ENCODE measurements at regions of chr2 and their contacts with region 1.

Region 1: DNA sequence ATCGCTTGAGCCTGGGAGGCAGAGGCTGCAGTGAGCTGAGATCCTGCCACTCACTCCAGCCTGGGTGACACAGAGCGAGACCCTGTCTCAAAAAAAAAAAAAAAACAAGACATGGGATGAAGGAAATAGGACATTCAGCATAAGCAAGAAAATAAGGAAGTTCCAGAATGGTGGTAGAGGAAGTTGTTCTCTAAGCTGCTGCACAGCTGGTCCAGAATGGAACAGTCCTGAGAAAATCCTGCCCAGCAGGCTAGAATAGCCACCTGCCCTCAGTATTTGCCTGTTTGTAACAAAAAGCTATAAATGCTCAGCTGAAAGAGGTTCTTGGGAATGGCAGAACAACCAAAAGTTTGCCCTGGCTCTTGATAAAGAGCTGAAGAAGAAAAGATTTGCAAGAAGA is 11.1 kb upstream of the MAPRE3 start:
- DNase-seq: no peak
- H3K4me3 ChIP-seq: no peak overlapping the region
- H3K27ac ChIP-seq: no peak overlapping the region
- H3K4me1 ChIP-seq: peaks cover 0 to 3% of the 10 kb centered on the region in 2 experiments; a peak in 1 of 4 replicates
- H3K27me3 ChIP-seq: peaks cover 48% of the 10 kb centered on the region
- CTCF ChIP-seq: no peak
- EP300 ChIP-seq: no peak
- RAD21 ChIP-seq: no peak

Region 2: GRCh38 chr2:26630669-26631360 is 328.5 kb before region 1 on chr2:
- CTCF ChIA-PET with region 1: no interaction called
- POLR2A ChIA-PET with region 1: no interaction called
- DNase-seq: no peak
- H3K4me3 ChIP-seq: no peak overlapping the region
- H3K27ac ChIP-seq: no peak overlapping the region
- H3K4me1 ChIP-seq: peaks cover 0 to 18% of the 10 kb centered on the region in 2 experiments; a peak in 1 of 4 replicates
- H3K27me3 ChIP-seq: 0 out of 2 replicates have a peak, but pooled peaks cover 26% of the 10 kb centered on the region
- CTCF ChIP-seq: no peak
- EP300 ChIP-seq: no peak
- RAD21 ChIP-seq: no peak

Region 3: DNA sequence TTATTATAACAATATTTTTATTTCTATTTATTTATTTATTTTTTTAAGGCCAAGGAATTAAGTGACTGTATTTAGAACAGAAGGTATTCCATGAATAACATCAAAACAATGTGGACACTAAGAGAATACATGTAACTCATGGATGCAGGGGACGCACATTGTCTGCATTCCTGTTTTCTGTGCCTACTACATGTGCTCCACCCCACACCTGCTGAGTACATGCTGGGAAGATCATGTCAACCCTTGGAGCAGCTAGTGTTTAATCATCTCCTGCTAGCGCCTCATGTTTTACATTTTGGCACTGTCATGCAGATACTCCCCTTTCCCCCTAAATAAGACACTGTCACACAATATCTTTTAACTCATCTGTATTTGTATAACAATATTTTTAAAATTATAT is 82.1 kb before region 1 on chr2:
- CTCF ChIA-PET with region 1: no interaction called
- POLR2A ChIA-PET with region 1: no interaction called
- DNase-seq: no peak
- H3K4me3 ChIP-seq: no peak overlapping the region
- H3K27ac ChIP-seq: no peak overlapping the region
- H3K4me1 ChIP-seq: peaks cover 0 to 2% of the 10 kb centered on the region in 2 experiments; a peak in 1 of 4 replicates
- H3K27me3 ChIP-seq: peaks cover 28% of the 10 kb centered on the region; the same call in 1 of the 2 replicates
- CTCF ChIP-seq: no peak
- EP300 ChIP-seq: no peak
- RAD21 ChIP-seq: no peak

Region 4: GRCh38 chr2:26970244-26970920 is 11.1 kb after region 1 on chr2 and contains the start of gene MAPRE3:
- CTCF ChIA-PET with region 1: interaction called, 257 read pairs
- POLR2A ChIA-PET with region 1: no interaction called
- DNase-seq: peak; percentile 100
- H3K4me3 ChIP-seq: peak within 1 kb of the TSS; percentile 65 to 78
- H3K27ac ChIP-seq: peak within 1 kb of the TSS in 1 of 2 experiments; percentile 7; a peak in 1 of 4 replicates
- H3K4me1 ChIP-seq: peaks cover 0 to 13% of the 10 kb centered on the region in 2 experiments; a peak in 2 of 4 replicates
- H3K27me3 ChIP-seq: peaks cover 7% of the 10 kb centered on the region; the same call in 1 of the 2 replicates
- CTCF ChIP-seq: no peak
- EP300 ChIP-seq: no peak
- RAD21 ChIP-seq: no peak
- polyA plus RNA-seq, gene MAPRE3: 20.2 and 24.4 TPM in 2 replicates

Region 5: GRCh38 chr2:27016801-27017325 is 57.5 kb after region 1 on chr2:
- CTCF ChIA-PET with region 1: interaction called, 1,017 read pairs
- POLR2A ChIA-PET with region 1: interaction called, 17 read pairs
- DNase-seq: peak; percentile 86
- H3K4me3 ChIP-seq: no peak overlapping the region
- H3K27ac ChIP-seq: peak overlapping the region in 1 of 2 experiments; percentile 68; a peak in 1 of 4 replicates
- H3K4me1 ChIP-seq: peaks cover 17 to 21% of the 10 kb centered on the region in 2 experiments; a peak in 2 of 4 replicates
- H3K27me3 ChIP-seq: no peaks in the 10 kb centered on the region
- CTCF ChIP-seq: peak; percentile 90
- EP300 ChIP-seq: no peak
- RAD21 ChIP-seq: peak; percentile 94

Region 6: DNA sequence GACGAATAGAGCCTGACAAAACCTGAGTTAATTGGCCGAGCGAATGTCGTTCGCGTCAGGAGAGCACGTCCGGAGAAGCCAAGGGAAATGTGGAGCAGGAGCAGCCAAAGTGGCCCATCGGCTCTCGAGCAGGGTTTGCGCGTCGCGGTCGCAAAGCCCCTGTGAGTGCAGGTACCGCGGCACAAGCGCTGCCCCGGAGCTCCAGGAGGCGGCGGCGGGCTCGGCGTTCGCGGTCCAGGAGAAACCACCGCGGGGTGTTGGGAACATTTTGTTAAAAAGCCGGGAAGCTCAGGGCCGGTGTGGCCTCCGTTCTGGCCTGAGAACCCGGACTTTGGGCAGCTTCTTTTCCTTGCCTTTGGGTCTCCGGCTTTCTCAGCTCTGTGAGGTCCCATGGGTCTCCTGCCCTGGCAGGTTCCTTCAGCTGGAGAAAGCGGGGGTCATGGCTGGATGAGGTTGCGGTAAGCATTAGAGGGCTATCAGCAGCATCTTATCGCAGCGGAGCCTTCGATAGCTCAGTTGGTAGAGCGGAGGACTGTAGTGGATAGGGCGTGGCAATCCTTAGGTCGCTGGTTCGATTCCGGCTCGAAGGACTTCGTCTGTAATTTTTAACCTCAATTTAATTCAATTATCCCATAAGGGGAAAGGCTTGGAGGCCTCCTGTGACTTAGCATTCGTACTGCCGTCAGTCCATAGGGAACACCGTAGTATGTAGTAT is 91.1 kb after region 1 on chr2:
- CTCF ChIA-PET with region 1: interaction called, 40 read pairs
- POLR2A ChIA-PET with region 1: interaction called, 8 read pairs
- DNase-seq: peak; percentile 93
- H3K4me3 ChIP-seq: peak overlapping the region; percentile 86 to 89
- H3K27ac ChIP-seq: peak overlapping the region; percentile 81 to 98
- H3K4me1 ChIP-seq: peaks cover 10 to 15% of the 10 kb centered on the region in 2 experiments; a peak in 2 of 4 replicates
- H3K27me3 ChIP-seq: no peaks in the 10 kb centered on the region
- CTCF ChIP-seq: peak; percentile 47
- EP300 ChIP-seq: peak in 1 of 2 experiments; percentile 76; a peak in 2 of 4 replicates
- RAD21 ChIP-seq: no peak; the same call in 1 of the 2 replicates

Region 7: GRCh38 chr2:27078267-27079194 is 119.2 kb after region 1 on chr2 and contains the start of gene EMILIN1:
- CTCF ChIA-PET with region 1: interaction called, 27 read pairs
- POLR2A ChIA-PET with region 1: no interaction called
- DNase-seq: peak; percentile 97
- H3K4me3 ChIP-seq: peak within 1 kb of the TSS; percentile 79 to 93
- H3K27ac ChIP-seq: peak within 1 kb of the TSS; percentile 79 to 99
- H3K4me1 ChIP-seq: peaks cover 36 to 76% of the 10 kb centered on the region in 2 experiments
- H3K27me3 ChIP-seq: no peaks in the 10 kb centered on the region
- CTCF ChIP-seq: peak; percentile 24
- EP300 ChIP-seq: peak; percentile 86 to 91; a peak in 3 of 4 replicates
- RAD21 ChIP-seq: peak; percentile 17
- polyA plus RNA-seq, gene EMILIN1: 184 and 286 TPM in 2 replicates

Region 8: GRCh38 chr2:27191053-27191829 is 231.9 kb after region 1 on chr2:
- CTCF ChIA-PET with region 1: interaction called, 24 read pairs
- POLR2A ChIA-PET with region 1: no interaction called
- DNase-seq: peak; percentile 84
- H3K4me3 ChIP-seq: no peak overlapping the region
- H3K27ac ChIP-seq: no peak overlapping the region
- H3K4me1 ChIP-seq: no peaks in the 10 kb centered on the region
- H3K27me3 ChIP-seq: no peaks in the 10 kb centered on the region
- CTCF ChIP-seq: peak; percentile 95
- EP300 ChIP-seq: 0 out of 4 replicates have a peak, but pooled peaks of 1 of the 2 experiments have one; percentile 20
- RAD21 ChIP-seq: peak; percentile 98

Region 9: DNA sequence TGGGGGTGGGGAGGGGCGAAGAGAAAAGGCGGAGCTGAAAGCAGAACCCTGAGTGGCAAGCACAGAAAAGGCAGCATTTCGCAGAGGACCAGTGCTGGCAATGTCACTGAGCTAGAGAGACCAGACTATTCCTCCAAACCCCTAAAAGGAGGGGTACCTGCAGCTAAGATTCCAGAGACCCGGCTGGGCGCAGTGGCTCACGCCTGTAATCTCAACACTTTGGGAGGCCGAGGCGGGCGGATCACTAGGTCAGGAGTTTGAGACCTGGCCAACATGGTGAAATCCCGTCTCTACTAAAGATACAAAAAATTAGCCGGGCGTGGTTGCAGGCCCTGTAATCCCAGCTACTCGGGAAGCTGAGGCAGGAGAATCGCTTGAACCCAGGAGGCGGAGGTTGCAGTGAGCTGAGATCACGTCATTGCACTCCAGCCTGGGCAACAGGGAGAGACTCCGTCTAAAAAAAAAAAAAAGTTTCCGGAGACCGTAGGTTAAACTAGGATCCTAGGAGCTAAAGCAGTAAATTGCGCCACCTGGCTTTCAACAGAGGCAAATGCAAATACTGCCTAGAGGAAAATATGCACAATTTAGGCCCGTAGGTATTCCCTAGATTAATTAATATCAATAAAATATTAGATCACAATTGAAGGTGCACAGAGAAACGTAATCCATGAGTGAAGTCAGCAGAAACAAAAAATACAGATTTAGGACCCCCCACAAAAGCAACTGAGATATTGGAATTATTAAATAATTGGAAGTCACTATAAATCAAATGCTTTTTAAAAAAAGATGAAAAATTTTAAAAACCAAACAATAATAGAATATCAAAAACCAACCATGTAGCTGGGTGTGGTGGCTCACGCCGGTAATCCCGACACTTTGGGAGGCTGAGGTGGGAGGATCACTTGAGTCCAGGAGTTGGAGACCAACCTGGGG is 344.0 kb after region 1 on chr2:
- CTCF ChIA-PET with region 1: interaction called, 20 read pairs
- POLR2A ChIA-PET with region 1: no interaction called
- DNase-seq: peak; percentile 85
- H3K4me3 ChIP-seq: peak overlapping the region in 1 of 2 experiments; percentile 24; a peak in 1 of 4 replicates
- H3K27ac ChIP-seq: no peak overlapping the region
- H3K4me1 ChIP-seq: peaks cover 0 to 15% of the 10 kb centered on the region in 2 experiments; a peak in 1 of 4 replicates
- H3K27me3 ChIP-seq: peaks cover 15% of the 10 kb centered on the region; the same call in 1 of the 2 replicates
- CTCF ChIP-seq: peak; percentile 99
- EP300 ChIP-seq: no peak
- RAD21 ChIP-seq: peak; percentile 79